Esophagus muscularis mucosa (tissue), 4 donors: ENCODE measurements at regions of chr10 and their contacts with region 1.

Region 1: DNA sequence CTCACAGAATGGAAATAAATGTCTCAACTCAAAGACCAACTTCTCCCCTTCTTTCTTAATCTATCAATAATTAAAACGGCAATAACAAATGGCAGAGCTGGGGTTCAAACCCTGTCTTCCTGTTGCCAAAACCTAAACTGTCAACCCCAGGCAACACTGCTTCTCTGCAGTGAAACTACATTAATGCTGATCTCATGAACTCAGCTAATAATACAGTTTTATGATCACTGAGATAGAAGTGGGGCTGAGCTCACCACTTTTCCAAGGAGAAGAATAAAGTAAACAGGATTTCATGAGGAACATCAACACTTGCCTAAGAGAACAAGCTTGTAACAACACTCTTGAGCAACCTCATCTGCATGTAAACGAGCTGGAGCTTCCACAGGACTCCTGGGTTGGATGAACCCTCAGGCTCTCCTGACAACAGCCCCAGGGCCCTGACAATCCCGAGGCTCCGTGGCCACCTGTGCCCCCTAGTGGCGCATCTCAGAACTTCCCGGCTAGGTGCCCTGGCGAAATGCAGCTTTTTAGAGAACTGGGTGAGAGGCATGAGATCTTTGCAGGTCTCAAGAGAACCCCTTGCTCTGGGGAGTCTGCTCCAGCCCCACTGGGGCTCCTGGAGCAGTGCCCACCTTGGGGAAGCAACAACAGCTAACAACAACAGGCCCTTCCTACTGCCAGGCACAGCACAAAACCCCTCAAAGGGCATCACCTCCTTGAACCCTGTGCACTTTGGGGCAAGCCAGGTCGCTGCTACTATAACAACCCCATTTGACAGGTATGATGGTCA is 169.3 kb downstream of the SH3PXD2A start:
- DNase-seq: peak; percentile 97
- H3K4me3 ChIP-seq: no peak overlapping the region
- H3K27ac ChIP-seq: peak overlapping the region in 3 of 4 donors; percentile 32 to 59 (median 49)
- H3K4me1 ChIP-seq: peaks cover 3 to 33% (median 10%) of the 10 kb centered on the region in 4 donors
- H3K27me3 ChIP-seq: no peaks in the 10 kb centered on the region
- CTCF ChIP-seq: peak in 2 of 3 experiments; percentile 96 to 98
- EP300 ChIP-seq: no peak
- POLR2A ChIP-seq: no peak

Region 2: GRCh38 chr10:103598654-103599115 is 87.4 kb before region 1 on chr10:
- intact Hi-C with region 1: loop called (anchors 2 kb)
- DNase-seq: no peak
- H3K4me3 ChIP-seq: no peak overlapping the region
- H3K27ac ChIP-seq: peak overlapping the region in 1 of 4 donors; percentile 4
- H3K4me1 ChIP-seq: peaks cover 10 to 41% (median 25%) of the 10 kb centered on the region in 4 donors
- H3K27me3 ChIP-seq: no peaks in the 10 kb centered on the region
- CTCF ChIP-seq: peak; percentile 64 to 69 (median 65)
- EP300 ChIP-seq: no peak
- POLR2A ChIP-seq: no peak